ENCODE measurements at regions of chr4 and their contacts with region 1.

Region 1: DNA sequence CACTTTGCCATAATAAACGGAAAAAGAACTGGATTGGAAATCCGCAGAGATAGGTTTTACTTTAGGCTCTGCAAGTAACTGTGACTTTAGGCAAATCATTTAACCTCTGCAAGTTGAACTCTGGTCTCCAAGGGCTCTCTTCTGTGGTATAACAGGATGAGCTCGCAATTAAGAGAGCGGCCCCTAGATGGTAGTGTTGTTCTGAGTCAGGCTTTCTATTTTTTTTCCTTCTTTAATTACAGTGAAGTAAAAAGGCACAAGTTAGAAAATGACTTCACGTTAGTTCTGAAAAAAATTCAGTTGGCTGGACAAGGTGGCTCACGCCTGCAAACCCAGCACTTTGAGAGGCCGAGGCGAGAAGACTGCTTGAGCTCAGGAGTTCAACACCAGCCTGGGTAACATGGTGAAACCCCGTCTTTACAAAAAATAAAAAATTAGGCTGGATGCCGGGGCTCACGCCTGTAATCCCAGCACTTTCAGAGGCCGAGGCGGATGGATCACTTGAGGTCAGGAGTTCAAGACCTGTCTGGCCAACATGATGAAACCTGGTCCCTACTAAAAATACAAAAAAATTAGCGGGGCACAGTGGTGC is 18.0 kb downstream of the RPS3A start:
- DNase-seq: peak; percentile 81
- H3K4me3 ChIP-seq: no peak overlapping the region
- H3K27ac ChIP-seq: no peak overlapping the region
- H3K4me1 ChIP-seq: no peaks in the 10 kb centered on the region
- H3K27me3 ChIP-seq: no peaks in the 10 kb centered on the region
- CTCF ChIP-seq: peak; percentile 82

Region 2: GRCh38 chr4:150849016-150849415 is 268.5 kb before region 1 on chr4:
- CTCF ChIA-PET with region 1: no interaction called
- POLR2A ChIA-PET with region 1: no interaction called
- intact Hi-C with region 1: no loop called
- DNase-seq: no peak
- H3K4me3 ChIP-seq: no peak overlapping the region
- H3K27ac ChIP-seq: no peak overlapping the region
- H3K4me1 ChIP-seq: no peaks in the 10 kb centered on the region
- H3K27me3 ChIP-seq: no peaks in the 10 kb centered on the region
- CTCF ChIP-seq: no peak

Region 3: DNA sequence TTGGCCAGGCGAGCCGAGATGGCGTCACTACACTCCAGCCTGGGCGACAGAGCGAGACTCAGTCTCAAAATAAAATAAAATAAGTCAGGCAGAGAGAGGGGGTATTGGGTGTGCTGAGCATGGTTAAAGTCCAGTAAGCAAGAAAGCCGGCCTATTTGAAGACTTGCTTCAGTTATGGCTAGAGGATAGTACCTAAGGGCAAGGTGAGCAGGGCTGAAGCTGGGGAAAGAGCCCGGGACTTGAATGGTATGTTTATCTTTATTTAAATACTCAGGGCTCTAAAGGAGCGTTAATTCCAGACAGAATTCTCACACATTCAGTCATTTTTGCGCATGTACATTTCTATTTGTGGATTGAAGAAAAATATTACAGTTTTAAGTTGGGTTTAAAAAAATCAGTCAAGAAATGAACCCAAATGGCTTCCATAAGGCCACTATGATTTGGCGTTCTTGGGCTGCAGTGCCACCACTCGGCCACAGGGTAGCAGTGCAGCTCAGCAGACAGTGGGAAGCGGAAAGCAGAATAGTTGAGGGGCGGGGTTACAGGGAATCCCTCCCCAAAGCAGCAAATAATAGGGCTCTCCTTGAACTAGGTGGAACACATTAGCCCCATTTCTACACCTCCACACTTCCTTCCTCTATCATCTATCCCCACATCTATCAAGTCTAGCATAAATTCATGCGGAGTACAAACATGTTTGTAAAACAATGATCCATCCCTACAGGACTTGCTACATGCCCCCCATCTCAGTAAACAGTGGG is 245.1 kb after region 1 on chr4:
- CTCF ChIA-PET with region 1: interaction called, 6 read pairs
- POLR2A ChIA-PET with region 1: no interaction called
- intact Hi-C with region 1: loop called (anchors 2 kb)
- DNase-seq: peak; percentile 89
- H3K4me3 ChIP-seq: no peak overlapping the region
- H3K27ac ChIP-seq: no peak overlapping the region
- H3K4me1 ChIP-seq: no peaks in the 10 kb centered on the region
- H3K27me3 ChIP-seq: peaks cover 5% of the 10 kb centered on the region
- CTCF ChIP-seq: peak; percentile 99

Region 4: DNA sequence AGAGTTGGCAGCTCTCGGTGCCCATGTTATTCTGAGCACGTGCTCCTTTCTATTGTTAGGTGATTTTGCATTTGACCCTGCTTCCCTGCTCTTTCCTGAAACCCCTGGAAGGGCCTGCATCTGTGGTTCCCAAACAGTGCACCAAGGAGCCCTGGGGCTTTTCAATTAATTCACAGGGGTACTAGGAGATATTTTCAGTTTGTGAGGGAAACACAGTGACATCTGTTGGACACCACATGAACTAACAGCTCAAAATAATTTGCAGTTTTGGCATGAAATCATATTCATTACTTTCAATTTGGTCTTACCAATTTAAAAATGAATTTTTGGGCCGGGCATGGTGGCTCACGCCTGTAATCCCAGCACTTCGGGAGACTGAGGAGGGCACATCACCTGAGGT is 486.8 kb after region 1 on chr4:
- CTCF ChIA-PET with region 1: interaction called, 9 read pairs
- POLR2A ChIA-PET with region 1: no interaction called
- intact Hi-C with region 1: loop called (anchors 2 kb)
- DNase-seq: peak; percentile 37
- H3K4me3 ChIP-seq: no peak overlapping the region
- H3K27ac ChIP-seq: no peak overlapping the region
- H3K4me1 ChIP-seq: no peaks in the 10 kb centered on the region
- H3K27me3 ChIP-seq: no peaks in the 10 kb centered on the region
- CTCF ChIP-seq: peak; percentile 57

Region 5: GRCh38 chr4:151644622-151645021 is 527.2 kb after region 1 on chr4:
- CTCF ChIA-PET with region 1: no interaction called
- POLR2A ChIA-PET with region 1: no interaction called
- intact Hi-C with region 1: loop called (anchors 1 kb)
- DNase-seq: peak; percentile 72
- H3K4me3 ChIP-seq: no peak overlapping the region
- H3K27ac ChIP-seq: no peak overlapping the region
- H3K4me1 ChIP-seq: peaks cover 11% of the 10 kb centered on the region
- H3K27me3 ChIP-seq: no peaks in the 10 kb centered on the region
- CTCF ChIP-seq: peak; percentile 74

Region 6: GRCh38 chr4:152385551-152385950 is 1268.1 kb after region 1 on chr4:
- CTCF ChIA-PET with region 1: no interaction called
- POLR2A ChIA-PET with region 1: no interaction called
- intact Hi-C with region 1: loop called (anchors 10 kb)
- DNase-seq: peak; percentile 25
- H3K4me3 ChIP-seq: no peak overlapping the region
- H3K27ac ChIP-seq: no peak overlapping the region
- H3K4me1 ChIP-seq: peaks cover 3% of the 10 kb centered on the region
- H3K27me3 ChIP-seq: no peaks in the 10 kb centered on the region
- CTCF ChIP-seq: peak; percentile 67